ENCODE measurements at regions of chr2 and their contacts with region 1.

Region 1: DNA sequence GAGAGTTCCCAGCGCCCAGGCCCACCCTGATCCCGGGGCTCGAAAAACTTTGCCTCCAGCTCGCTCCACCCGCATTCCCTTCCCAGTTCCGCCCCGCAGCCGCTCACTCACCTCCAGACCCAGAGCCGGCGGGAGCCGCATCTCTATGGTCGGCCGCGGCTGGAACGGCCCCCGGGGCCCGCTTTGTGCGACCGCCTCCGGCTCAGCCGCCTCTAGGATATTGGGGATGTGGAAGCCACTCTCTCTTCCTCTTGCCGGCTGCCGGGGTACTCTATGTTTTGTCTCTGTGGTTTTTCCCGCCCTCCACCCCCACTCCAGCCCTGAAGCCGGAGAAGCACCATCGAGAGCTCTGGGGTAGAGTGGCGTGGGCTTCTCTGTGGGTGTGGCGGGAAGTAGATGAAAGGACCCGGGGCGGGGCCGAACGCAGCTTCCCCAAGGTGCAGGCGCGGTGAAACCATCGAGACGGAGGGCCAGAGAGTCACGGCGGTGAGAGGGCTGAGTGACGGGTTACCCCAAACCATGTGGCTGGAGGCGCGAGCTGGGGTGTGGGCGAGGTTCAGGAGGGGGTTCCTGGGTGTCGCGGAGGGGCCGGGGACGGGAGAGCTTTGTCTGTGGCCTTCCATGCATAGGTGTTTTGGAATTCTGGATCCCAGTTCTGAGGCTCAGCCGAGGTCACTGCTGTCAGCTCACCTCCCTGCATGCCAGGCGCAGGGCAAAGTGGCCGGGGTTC is at the starts of genes BCS1L and ZNF142:
- DNase-seq: peak; percentile 98
- H3K4me3 Mint-ChIP-seq: peak within 1 kb of the TSS; percentile 93
- H3K27ac Mint-ChIP-seq: peak within 1 kb of the TSS; percentile 80
- H3K4me1 Mint-ChIP-seq: peaks cover 26% of the 10 kb centered on the region
- H3K27me3 Mint-ChIP-seq: no peaks in the 10 kb centered on the region
- total RNA-seq, gene BCS1L: 57.1 to 64.5 TPM
- total RNA-seq, gene ZNF142: 33.7 to 34.8 TPM

Region 2: DNA sequence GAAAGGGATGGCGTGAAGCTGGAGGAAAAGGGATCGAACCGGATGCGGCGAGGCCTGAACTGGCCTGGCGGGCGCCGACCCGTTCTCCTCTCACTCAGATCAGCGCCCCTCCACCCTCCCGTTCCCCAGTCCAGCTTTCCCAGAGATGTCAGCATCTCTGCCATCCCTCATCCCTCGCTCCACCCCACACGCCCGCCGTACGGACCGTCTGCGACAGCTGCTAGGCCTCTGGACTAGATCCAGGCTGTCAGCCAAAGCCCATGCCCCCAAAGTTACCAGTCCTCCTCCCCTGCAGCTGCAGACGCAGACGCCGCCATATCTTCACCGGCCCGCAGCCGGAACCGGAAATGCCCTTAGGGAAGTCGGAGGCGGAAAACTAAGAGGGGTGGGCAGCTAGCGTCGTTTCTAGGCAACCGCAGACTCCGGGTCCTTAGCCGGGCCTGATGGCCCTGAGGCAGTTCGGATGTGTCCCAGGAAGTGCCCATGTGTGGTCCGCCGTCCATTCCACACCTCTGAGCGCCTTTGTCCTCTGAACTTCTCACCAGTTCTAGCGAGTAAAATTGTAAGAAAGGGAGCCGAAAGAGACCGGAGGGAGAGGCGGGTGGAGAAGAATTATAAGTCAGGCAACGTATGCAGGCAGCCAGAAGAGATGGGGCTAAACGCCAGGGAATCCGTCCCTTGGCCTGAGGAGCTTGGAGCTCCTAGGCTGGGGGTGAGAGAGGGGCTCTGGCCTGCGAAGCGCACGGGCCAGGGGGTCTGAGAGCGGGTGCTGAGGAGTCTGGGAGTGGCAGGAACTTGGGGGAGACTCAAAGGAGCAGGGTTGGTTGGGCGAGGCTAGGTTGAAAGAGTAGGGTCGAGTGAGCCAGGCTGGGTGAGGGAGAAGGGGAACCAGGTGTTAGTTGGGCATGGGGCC is 12.5 kb after region 1 on chr2 and contains the starts of genes RNF25 and STK36:
- CTCF ChIA-PET with region 1: interaction called, 27 read pairs
- POLR2A ChIA-PET with region 1: interaction called, 50 read pairs
- intact Hi-C with region 1: loop called (anchors 1 kb)
- DNase-seq: peak; percentile 90
- H3K4me3 Mint-ChIP-seq: peak within 1 kb of the TSS; percentile 96
- H3K27ac Mint-ChIP-seq: peak within 1 kb of the TSS; percentile 89
- H3K4me1 Mint-ChIP-seq: peaks cover 22% of the 10 kb centered on the region
- H3K27me3 Mint-ChIP-seq: no peaks in the 10 kb centered on the region
- total RNA-seq, gene RNF25: 15.2 to 15.6 TPM
- total RNA-seq, gene STK36: 15.9 to 19.0 TPM

Region 3: GRCh38 chr2:218710687-218711549 is 51.5 kb after region 1 on chr2 and contains the start of gene TTLL4:
- CTCF ChIA-PET with region 1: interaction called, 18 read pairs
- POLR2A ChIA-PET with region 1: interaction called, 14 read pairs
- intact Hi-C with region 1: loop called (anchors 1 kb)
- DNase-seq: peak; percentile 99
- H3K4me3 Mint-ChIP-seq: peak within 1 kb of the TSS; percentile 88
- H3K27ac Mint-ChIP-seq: peak within 1 kb of the TSS; percentile 72
- H3K4me1 Mint-ChIP-seq: peaks cover 20% of the 10 kb centered on the region
- H3K27me3 Mint-ChIP-seq: no peaks in the 10 kb centered on the region
- total RNA-seq, gene TTLL4: 30.1 to 32.1 TPM

Region 4: GRCh38 chr2:219253753-219254590 is 594.5 kb after region 1 on chr2 and contains the start of gene TUBA4A:
- CTCF ChIA-PET with region 1: no interaction called
- POLR2A ChIA-PET with region 1: no interaction called
- intact Hi-C with region 1: loop called (anchors 10 kb)
- DNase-seq: peak; percentile 92
- H3K4me3 Mint-ChIP-seq: peak within 1 kb of the TSS; percentile 86
- H3K27ac Mint-ChIP-seq: peak within 1 kb of the TSS; percentile 97
- H3K4me1 Mint-ChIP-seq: peaks cover 49% of the 10 kb centered on the region
- H3K27me3 Mint-ChIP-seq: no peaks in the 10 kb centered on the region
- total RNA-seq, gene TUBA4A: 219 to 229 TPM